Spleen (tissue), 13 donors: ENCODE measurements at regions of chr13 and their contacts with region 1.

Region 1: DNA sequence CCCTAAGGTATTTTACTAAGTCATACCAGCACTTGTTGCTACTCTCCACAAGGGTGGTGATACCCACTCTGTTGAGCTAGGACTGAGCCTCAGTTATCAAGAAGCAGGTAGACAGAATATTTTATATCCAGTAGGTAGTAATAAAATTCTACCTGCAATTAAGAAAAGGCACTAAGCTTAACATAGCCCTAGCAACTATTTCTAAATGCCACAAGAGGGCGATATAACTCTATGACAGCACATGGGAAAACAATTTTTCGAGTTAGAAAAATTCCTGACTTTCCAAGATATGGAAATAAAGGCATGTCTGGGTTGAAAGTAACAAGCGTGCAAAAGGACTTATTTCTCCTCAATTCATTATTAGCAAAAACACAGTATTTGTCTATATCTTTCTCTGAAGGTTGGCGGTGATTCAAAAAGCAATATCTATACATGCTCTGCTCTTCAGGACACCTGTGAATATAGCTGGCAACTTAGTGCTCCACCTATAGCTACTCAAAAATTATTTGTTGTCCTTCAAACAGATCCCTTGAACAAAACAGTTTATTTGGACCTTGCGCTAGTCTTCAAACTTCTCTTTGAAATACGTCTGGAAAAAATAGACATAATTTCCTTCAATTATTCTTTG is 14.7 kb downstream of the CCDC169 start:
- DNase-seq: no peak
- H3K4me3 ChIP-seq: no peak overlapping the region
- H3K27ac ChIP-seq: no peak overlapping the region
- H3K4me1 ChIP-seq: no peaks in the 10 kb centered on the region
- H3K27me3 ChIP-seq: no peaks in the 10 kb centered on the region
- CTCF ChIP-seq: peak; percentile 23 to 74 (median 62)
- POLR2A ChIP-seq: no peak

Region 2: GRCh38 chr13:35646056-35646774 is 636.7 kb before region 1 on chr13:
- intact Hi-C with region 1: no loop called
- DNase-seq: no peak
- H3K4me3 ChIP-seq: no peak overlapping the region
- H3K27ac ChIP-seq: no peak overlapping the region
- H3K4me1 ChIP-seq: no peaks in the 10 kb centered on the region
- H3K27me3 ChIP-seq: no peaks in the 10 kb centered on the region
- CTCF ChIP-seq: no peak
- POLR2A ChIP-seq: no peak

Region 3: GRCh38 chr13:36395280-36395679 is 112.3 kb after region 1 on chr13:
- intact Hi-C with region 1: loop called (anchors 10 kb)
- DNase-seq: no peak
- H3K4me3 ChIP-seq: no peak overlapping the region
- H3K27ac ChIP-seq: no peak overlapping the region
- H3K4me1 ChIP-seq: no peaks in the 10 kb centered on the region
- H3K27me3 ChIP-seq: no peaks in the 10 kb centered on the region
- CTCF ChIP-seq: peak in 2 of 11 experiments; percentile 19 to 21
- POLR2A ChIP-seq: no peak

Region 4: DNA sequence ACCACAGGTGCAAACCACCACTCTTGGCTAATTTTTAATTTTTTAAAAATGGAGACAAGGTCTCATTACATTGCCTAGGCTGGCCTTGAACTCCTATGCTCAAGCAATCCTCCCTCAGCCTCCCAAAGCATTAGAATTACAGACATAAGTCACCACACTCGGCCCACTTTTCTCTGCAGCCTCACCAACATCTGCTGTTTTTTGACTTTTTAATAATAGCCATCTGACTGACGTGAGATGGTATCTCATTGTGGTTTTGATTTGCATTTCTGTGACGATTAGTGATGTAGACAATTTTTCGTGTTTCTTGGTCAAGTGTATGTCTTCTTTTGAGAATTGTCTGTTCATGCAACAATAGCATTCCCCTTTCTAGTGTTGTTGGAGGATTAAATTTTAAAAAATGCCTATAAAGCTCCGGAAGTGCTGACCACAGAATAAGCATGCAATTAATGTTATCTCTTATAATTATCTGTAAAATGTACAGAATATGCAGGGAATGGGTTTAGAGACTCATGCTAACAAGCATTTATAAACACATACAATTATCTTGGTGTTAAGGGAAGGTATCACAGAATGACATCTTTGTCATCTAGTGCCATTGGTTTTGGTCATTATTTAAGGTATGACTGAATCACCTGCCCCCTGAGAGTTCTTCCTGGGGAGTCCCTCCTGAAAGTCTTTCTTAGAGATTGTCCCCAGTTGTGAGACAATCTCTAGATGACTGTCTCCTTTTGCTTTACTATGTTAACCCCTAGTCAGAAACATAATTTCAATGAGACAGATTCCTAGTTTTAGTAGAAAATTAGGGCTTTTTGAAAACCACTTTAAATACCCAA is 272.4 kb after region 1 on chr13:
- intact Hi-C with region 1: no loop called
- DNase-seq: no peak
- H3K4me3 ChIP-seq: no peak overlapping the region
- H3K27ac ChIP-seq: no peak overlapping the region
- H3K4me1 ChIP-seq: no peaks in the 10 kb centered on the region
- H3K27me3 ChIP-seq: no peaks in the 10 kb centered on the region
- CTCF ChIP-seq: no peak
- POLR2A ChIP-seq: no peak

Region 5: GRCh38 chr13:36736119-36736726 is 453.3 kb after region 1 on chr13:
- intact Hi-C with region 1: loop called (anchors 5 kb)
- DNase-seq: no peak
- H3K4me3 ChIP-seq: no peak overlapping the region
- H3K27ac ChIP-seq: no peak overlapping the region
- H3K4me1 ChIP-seq: no peaks in the 10 kb centered on the region
- H3K27me3 ChIP-seq: no peaks in the 10 kb centered on the region
- CTCF ChIP-seq: peak in 9 of 11 experiments; percentile 19 to 73 (median 48)
- POLR2A ChIP-seq: no peak